B cell (primary cell): ENCODE measurements at regions of chr7 and their contacts with region 1.

Region 1: GRCh38 chr7:105387621-105388372 is 924 bp downstream of the SRPK2 start:
- DNase-seq: peak; percentile 70
- ATAC-seq: peak; percentile 43
- H3K4me3 ChIP-seq: peak overlapping the region; percentile 60 to 91 (median 77)
- H3K4me3 Mint-ChIP-seq: peak overlapping the region; percentile 92
- H3K27ac ChIP-seq: peak overlapping the region in 1 of 2 donors; percentile 24
- H3K27ac Mint-ChIP-seq: peak overlapping the region; percentile 78
- H3K4me1 ChIP-seq: peaks cover 10 to 14% of the 10 kb centered on the region in 2 donors
- H3K4me1 Mint-ChIP-seq: peaks cover 30% of the 10 kb centered on the region
- H3K27me3 ChIP-seq: no peaks in the 10 kb centered on the region
- H3K27me3 Mint-ChIP-seq: no peaks in the 10 kb centered on the region
- CTCF ChIP-seq: no peak

Region 2: DNA sequence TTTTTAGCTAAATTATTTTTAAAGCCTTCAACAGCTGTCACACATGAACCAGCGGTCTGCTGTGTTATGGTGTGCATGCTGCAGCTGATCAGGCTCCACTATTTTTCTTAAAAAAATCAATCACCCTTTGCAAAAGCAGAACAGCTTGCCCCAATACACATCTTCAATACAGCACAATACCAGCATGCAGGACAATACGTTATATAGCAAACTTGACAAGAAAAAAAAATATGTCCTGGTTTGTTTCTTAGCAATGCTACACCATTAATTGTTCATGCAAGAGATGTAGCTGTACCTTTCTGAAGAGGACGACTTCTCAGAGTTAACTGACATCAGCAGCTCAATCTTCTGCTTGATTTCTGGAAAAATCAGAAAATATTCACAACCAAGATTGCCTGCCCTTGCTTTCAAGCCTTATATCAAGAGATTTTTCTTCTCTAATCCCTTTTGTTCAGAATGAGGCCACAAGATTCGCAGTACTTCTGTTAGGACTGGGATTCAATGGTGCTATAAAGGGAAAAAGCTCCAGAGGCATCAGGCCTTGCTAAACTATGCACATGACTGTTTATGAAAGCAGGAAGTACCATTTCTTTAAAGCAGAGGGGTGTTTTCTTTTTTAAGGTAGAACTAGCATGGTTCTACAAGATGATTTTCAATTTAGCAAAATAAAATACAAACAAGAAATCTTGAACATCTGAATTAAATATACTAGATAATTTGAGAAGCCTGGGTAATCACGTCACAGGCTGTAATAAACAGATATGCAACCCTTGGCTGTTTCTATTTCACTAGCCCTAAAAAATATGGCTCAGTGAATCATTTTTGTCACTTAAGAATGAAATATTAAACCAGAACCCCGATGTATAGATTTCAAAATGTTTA is 119.0 kb before region 1 on chr7:
- CTCF ChIA-PET with region 1: no interaction called
- POLR2A ChIA-PET with region 1: interaction called, 3 read pairs
- intact Hi-C with region 1: loop called (anchors 2 kb)
- DNase-seq: peak; percentile 57
- ATAC-seq: peak; percentile 69
- H3K4me3 ChIP-seq: peak overlapping the region; percentile 20 to 73 (median 48)
- H3K4me3 Mint-ChIP-seq: peak overlapping the region; percentile 82
- H3K27ac ChIP-seq: peak overlapping the region; percentile 20 to 61
- H3K27ac Mint-ChIP-seq: peak overlapping the region; percentile 79
- H3K4me1 ChIP-seq: peaks cover 15 to 18% of the 10 kb centered on the region in 2 donors
- H3K4me1 Mint-ChIP-seq: peaks cover 53% of the 10 kb centered on the region
- H3K27me3 ChIP-seq: no peaks in the 10 kb centered on the region
- H3K27me3 Mint-ChIP-seq: no peaks in the 10 kb centered on the region
- CTCF ChIP-seq: no peak

Region 3: DNA sequence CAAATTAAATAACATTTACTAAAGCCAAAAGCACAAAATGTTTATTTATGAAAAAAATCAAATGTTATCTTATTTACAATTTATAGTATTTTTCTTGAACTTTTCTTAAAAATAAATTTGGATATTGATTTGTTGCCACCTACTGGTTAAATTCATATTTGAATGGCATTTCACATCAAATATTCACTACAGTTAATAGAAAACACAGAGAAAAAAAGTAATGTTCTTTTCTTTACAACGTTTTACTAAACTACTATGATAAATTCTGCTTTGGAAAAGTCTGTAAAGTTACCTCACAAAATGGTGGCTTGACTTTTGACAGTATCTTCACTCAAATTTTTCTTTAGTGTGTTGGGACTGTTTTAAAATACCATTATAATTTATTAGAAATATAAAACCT is 51.8 kb before region 1 on chr7:
- CTCF ChIA-PET with region 1: interaction called, 6 read pairs
- POLR2A ChIA-PET with region 1: no interaction called
- intact Hi-C with region 1: loop called (anchors 10 kb)
- DNase-seq: no peak
- ATAC-seq: no peak
- H3K4me3 ChIP-seq: no peak overlapping the region
- H3K4me3 Mint-ChIP-seq: no peak overlapping the region
- H3K27ac ChIP-seq: no peak overlapping the region
- H3K27ac Mint-ChIP-seq: no peak overlapping the region
- H3K4me1 ChIP-seq: peaks cover 0 to 4% of the 10 kb centered on the region in 2 donors
- H3K4me1 Mint-ChIP-seq: peaks cover 40% of the 10 kb centered on the region
- H3K27me3 ChIP-seq: no peaks in the 10 kb centered on the region
- H3K27me3 Mint-ChIP-seq: no peaks in the 10 kb centered on the region
- CTCF ChIP-seq: peak; percentile 68

Region 4: DNA sequence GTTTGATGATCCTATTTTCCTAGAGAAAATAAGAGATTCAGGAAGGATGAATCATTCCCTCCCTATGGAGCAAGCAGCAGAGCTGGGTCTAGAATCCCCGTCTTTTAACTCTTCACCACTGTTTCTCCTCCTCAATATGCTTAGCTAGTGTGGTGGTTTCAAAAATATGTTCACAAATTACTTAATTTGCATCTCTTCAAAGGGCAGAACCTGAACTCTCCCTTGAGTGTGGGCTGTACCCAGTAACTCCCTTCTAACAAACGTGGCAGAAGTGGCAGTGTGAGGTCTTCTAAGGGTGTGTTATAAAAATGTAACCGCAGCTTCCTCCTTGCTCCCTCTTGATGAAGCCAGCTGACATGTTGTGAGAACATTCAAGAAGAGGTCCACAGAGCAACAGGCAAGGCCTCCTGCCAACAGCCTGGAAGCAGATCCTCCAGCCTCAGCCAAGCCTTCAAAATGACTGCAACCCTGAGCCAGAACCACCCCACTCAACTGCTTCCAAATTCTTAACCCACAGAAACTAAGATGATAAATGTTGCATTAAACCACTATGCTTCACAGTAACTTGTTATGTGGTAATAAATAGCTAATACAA is 35.7 kb before region 1 on chr7:
- CTCF ChIA-PET with region 1: interaction called, 10 read pairs
- POLR2A ChIA-PET with region 1: interaction called, 24 read pairs
- intact Hi-C with region 1: loop called (anchors 1 kb)
- DNase-seq: peak; percentile 90
- ATAC-seq: peak; percentile 88
- H3K4me3 ChIP-seq: peak overlapping the region; percentile 0 to 41 (median 32)
- H3K4me3 Mint-ChIP-seq: peak overlapping the region; percentile 82
- H3K27ac ChIP-seq: peak overlapping the region; percentile 75 to 80
- H3K27ac Mint-ChIP-seq: peak overlapping the region; percentile 99
- H3K4me1 ChIP-seq: peaks cover 84 to 91% of the 10 kb centered on the region in 2 donors
- H3K4me1 Mint-ChIP-seq: peaks cover 64% of the 10 kb centered on the region
- H3K27me3 ChIP-seq: no peaks in the 10 kb centered on the region
- H3K27me3 Mint-ChIP-seq: no peaks in the 10 kb centered on the region
- CTCF ChIP-seq: no peak

Region 5: DNA sequence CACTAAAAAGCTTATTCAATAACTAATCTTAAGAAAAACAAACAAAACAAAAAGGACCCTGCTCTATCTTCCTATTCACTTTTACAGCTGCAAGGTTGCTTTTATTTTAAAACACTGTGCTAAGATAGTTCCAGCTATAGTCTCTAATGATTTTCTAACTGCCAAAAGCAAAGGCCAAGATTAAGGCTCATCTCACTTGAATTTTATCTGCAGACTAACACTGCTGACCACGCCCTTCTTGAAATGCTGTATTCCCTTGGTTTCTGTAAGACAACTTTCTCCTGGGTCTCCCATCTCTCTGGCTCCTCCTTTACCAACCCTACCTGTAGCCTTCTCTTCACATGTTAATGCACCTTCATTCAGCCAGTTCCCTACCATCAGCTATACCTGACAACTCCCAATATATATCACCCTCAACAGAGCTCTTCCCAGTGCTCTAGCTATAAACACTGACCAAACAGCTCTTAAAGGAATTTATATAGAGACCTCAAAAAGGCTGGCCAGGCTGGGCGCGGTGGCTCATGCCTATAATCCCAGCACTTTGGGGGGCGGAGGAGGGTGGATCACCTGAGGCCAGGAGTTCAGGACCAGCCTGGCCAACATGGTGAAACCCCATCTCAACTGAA is 10.8 kb before region 1 on chr7:
- CTCF ChIA-PET with region 1: interaction called, 3 read pairs
- POLR2A ChIA-PET with region 1: no interaction called
- intact Hi-C with region 1: loop called (anchors 2 kb)
- DNase-seq: no peak
- ATAC-seq: no peak
- H3K4me3 ChIP-seq: no peak overlapping the region
- H3K4me3 Mint-ChIP-seq: no peak overlapping the region
- H3K27ac ChIP-seq: no peak overlapping the region
- H3K27ac Mint-ChIP-seq: peak overlapping the region; percentile 10
- H3K4me1 ChIP-seq: peaks cover 0 to 4% of the 10 kb centered on the region in 2 donors
- H3K4me1 Mint-ChIP-seq: peaks cover 47% of the 10 kb centered on the region
- H3K27me3 ChIP-seq: no peaks in the 10 kb centered on the region
- H3K27me3 Mint-ChIP-seq: no peaks in the 10 kb centered on the region
- CTCF ChIP-seq: no peak

Region 6: DNA sequence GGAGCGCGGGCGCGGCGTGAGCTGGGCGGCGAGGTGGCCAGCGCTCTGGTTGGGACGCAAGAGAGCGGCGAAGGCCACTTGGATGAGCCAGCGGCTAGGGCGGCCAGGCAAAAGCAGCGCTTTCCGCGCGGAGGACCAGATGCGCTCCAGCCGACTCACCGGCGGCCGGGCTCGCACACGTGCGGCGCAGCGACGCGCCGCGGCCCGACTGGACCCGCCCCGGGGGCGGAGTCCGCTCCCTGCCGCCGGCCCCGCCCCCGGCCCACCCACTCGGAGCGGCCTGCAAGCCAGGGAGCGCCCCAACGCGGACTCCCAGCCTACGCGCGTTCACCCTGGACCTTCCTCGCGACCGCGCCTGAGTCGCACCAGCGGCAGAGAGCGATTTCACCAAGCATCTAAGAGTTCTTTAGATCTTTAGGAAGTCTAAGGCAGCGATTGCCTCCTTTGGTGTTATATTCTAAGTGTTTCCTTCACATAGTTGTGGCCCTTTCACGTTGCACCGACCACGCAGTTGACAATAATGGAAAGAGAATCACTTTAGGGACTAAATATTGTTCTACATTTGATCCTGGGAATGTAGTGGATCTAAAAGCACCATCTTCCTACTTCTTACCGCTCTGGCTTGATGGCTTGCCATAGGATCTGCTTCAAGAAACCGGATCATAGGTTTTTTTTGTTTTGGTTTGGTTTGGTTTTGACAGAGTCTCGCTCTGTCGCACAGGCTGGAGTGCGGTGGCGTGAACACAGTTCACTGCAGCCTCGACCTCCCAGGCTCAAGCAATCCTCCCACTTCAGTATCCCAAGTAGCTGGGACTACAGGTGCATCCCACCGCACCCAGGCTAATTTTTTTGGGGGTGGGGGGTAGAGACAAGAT is 134.5 kb after region 1 on chr7 and contains the start of gene PUS7:
- CTCF ChIA-PET with region 1: no interaction called
- POLR2A ChIA-PET with region 1: no interaction called
- intact Hi-C with region 1: loop called (anchors 5 kb)
- DNase-seq: peak; percentile 90
- ATAC-seq: peak; percentile 93
- H3K4me3 ChIP-seq: peak within 1 kb of the TSS; percentile 21 to 70 (median 59)
- H3K4me3 Mint-ChIP-seq: peak within 1 kb of the TSS; percentile 98
- H3K27ac ChIP-seq: peak within 1 kb of the TSS; percentile 57 to 62
- H3K27ac Mint-ChIP-seq: peak within 1 kb of the TSS; percentile 90
- H3K4me1 ChIP-seq: peaks cover 13 to 22% of the 10 kb centered on the region in 2 donors
- H3K4me1 Mint-ChIP-seq: peaks cover 23% of the 10 kb centered on the region
- H3K27me3 ChIP-seq: no peaks in the 10 kb centered on the region
- H3K27me3 Mint-ChIP-seq: no peaks in the 10 kb centered on the region
- CTCF ChIP-seq: no peak
- total RNA-seq, gene PUS7: 7.1 and 7.7 TPM in 2 replicates